K562 (cell line): ENCODE measurements at regions of chr4 and their contacts with region 1.

Region 1: DNA sequence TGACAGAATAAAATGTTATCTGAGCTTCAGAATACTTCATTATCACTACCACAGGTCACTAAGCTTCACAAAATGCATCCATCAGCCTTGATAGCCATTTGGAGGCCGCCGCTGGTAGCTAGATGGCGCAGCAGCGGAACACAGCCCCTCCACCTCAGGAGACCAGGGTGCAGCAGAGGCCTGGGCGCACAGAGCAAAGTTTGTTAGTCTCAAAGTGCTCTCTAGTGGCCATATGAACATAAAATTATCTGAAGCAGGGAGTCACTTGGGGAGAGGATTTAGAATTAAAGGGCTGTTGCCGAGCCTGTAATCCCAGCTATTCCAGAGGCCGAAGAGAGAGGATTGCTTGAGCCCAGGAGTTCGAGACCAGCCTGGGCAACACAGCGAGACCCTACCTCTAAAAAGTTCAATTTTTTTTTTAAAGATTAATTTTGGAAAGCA is 8.1 kb upstream of the DCTD start:
- DNase-seq: peak; percentile 48 to 90 (median 63)
- ATAC-seq: peak; percentile 99
- H3K4me3 ChIP-seq: no peak overlapping the region
- H3K27ac ChIP-seq: no peak overlapping the region
- H3K4me1 ChIP-seq: peaks cover 0 to 3% of the 10 kb centered on the region in 2 experiments; a peak in 1 of 5 replicates
- H3K27me3 ChIP-seq: no peaks in the 10 kb centered on the region
- CTCF ChIP-seq: peak; percentile 95 to 98 (median 98)
- EP300 ChIP-seq: no peak
- POLR2A ChIP-seq: no peak
- RAD21 ChIP-seq: peak; percentile 82 to 84

Region 2: GRCh38 chr4:182478475-182478874 is 446.8 kb before region 1 on chr4:
- CTCF ChIA-PET with region 1: interaction called, 4 read pairs
- POLR2A ChIA-PET with region 1: no interaction called
- in situ Hi-C with region 1: no loop called
- intact Hi-C with region 1: loop called (anchors 1 kb)
- DNase-seq: peak; percentile 7 to 26 (median 18)
- ATAC-seq: peak; percentile 74
- H3K4me3 ChIP-seq: no peak overlapping the region
- H3K27ac ChIP-seq: no peak overlapping the region
- H3K4me1 ChIP-seq: no peaks in the 10 kb centered on the region
- H3K27me3 ChIP-seq: no peaks in the 10 kb centered on the region
- CTCF ChIP-seq: peak; percentile 24 to 48 (median 26); a peak in 3 of 6 replicates
- EP300 ChIP-seq: no peak
- POLR2A ChIP-seq: no peak
- RAD21 ChIP-seq: peak in 1 of 2 experiments; percentile 20; a peak in 1 of 4 replicates

Region 3: GRCh38 chr4:182653596-182653995 is 271.7 kb before region 1 on chr4:
- CTCF ChIA-PET with region 1: no interaction called
- POLR2A ChIA-PET with region 1: no interaction called
- in situ Hi-C with region 1: no loop called
- intact Hi-C with region 1: loop called (anchors 5 kb)
- DNase-seq: no peak
- ATAC-seq: no peak
- H3K4me3 ChIP-seq: no peak overlapping the region
- H3K27ac ChIP-seq: no peak overlapping the region
- H3K4me1 ChIP-seq: no peaks in the 10 kb centered on the region
- H3K27me3 ChIP-seq: peaks cover 0 to 2% of the 10 kb centered on the region in 2 experiments; a peak in 1 of 5 replicates
- CTCF ChIP-seq: no peak
- EP300 ChIP-seq: no peak
- POLR2A ChIP-seq: no peak
- RAD21 ChIP-seq: no peak

Region 4: DNA sequence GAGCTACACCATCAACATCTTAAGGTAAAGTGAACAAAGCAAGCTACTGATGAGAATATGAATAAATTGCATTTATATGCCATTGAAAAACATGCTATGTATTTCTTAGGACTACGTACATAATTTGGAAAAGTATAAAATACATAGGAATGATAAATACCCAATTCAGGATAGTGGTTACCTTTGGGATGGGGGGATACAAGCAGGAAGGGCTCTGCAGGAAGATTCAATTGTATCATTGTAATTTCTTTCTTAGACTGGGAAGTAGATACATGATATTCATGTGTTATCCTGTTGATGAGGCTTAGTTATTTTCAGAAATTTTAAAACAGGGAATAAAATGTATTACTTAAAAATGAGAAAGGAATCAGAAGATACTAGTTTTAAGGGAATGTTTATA is 777.2 kb after region 1 on chr4:
- CTCF ChIA-PET with region 1: no interaction called
- POLR2A ChIA-PET with region 1: no interaction called
- in situ Hi-C with region 1: no loop called
- intact Hi-C with region 1: no loop called
- DNase-seq: no peak
- ATAC-seq: no peak
- H3K4me3 ChIP-seq: no peak overlapping the region
- H3K27ac ChIP-seq: no peak overlapping the region
- H3K4me1 ChIP-seq: no peaks in the 10 kb centered on the region
- H3K27me3 ChIP-seq: no peaks in the 10 kb centered on the region
- CTCF ChIP-seq: no peak
- EP300 ChIP-seq: no peak
- POLR2A ChIP-seq: no peak
- RAD21 ChIP-seq: no peak